A549 (cell line): ENCODE measurements at regions of chr1 and their contacts with region 1.

Region 1: DNA sequence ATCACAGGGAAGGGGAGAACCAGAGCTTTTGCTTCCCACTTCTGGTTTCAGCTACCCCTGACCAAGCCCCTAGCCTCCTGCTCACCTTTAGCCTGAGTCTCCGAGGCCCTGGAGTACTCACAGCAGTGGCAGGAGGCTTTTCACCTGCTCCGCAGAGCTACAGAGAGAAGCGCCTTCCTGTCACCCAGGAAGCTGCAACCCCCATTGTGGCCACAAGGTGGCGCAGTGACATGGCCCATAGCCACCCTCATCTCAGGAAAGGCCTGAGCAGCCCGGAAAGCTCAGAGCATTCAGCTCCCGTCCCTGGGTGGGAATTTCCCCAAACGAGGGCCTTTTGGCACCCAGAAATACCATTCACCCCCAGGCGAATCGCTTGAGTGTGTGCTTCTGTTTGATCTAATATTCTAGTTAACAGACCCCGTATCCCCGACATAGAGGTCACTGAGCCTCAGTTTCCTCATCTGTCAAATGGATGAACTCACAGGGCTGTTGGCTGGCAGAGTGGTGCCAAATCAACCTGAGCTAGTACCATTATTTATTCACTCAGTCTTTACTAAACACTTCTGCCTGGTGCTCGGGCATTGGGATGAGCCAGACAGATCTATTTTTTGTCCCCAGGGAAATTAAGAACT is 25.3 kb downstream of the A3GALT2 start:
- DNase-seq: peak; percentile 68 to 75
- ATAC-seq: peak; percentile 85 to 94
- H3K4me3 ChIP-seq: no peak overlapping the region
- H3K27ac ChIP-seq: no peak overlapping the region
- H3K4me1 ChIP-seq: no peaks in the 10 kb centered on the region
- CTCF ChIP-seq: peak; percentile 85
- EP300 ChIP-seq: no peak
- POLR2A ChIP-seq: no peak
- RAD21 ChIP-seq: peak; percentile 75

Region 2: DNA sequence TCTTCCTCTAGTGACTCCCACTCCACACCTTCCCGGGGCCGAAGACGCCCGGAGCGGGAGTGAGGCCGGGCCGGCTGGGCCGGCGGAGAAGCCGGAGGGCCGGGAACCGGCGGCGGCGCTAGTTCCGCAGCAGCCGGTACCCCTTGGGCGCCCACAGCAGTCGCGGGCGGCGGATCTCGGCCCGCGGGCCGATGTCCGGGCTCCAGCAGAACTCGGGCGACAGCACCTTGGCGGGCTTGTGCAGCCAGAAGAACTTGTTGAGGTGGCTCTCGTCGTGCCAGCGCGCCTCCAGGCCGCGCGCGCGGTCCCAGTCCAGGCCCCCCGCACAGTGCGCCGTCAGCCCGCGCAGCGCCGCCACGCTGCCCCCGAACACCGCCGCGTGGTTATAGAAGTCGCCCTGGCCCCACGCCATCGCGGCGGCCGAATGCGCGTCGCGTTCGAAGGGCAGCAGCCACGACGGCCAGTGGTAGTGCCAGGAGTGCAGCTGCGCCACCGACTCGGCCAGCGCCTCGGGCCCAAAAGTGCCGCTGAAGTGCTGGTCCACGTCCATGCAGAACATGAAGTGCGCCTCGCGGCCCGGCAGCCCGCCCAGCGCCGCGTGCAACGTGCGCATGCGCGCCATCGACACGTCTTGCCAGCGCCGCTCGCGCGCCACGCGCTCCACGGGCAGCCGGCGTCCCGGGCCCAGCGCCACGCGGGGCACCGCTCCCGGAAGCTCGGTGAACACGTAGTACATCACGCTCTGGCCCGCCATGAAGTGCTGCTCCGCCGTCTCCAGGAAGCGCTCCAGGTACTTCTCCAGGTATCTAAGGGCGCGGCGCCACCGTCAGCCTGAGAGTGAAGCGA is 11.3 kb after region 1 on chr1:
- CTCF ChIA-PET with region 1: interaction called, 26 read pairs
- POLR2A ChIA-PET with region 1: no interaction called
- DNase-seq: no peak
- ATAC-seq: no peak
- H3K4me3 ChIP-seq: no peak overlapping the region
- H3K27ac ChIP-seq: no peak overlapping the region
- H3K4me1 ChIP-seq: no peaks in the 10 kb centered on the region
- CTCF ChIP-seq: no peak
- EP300 ChIP-seq: no peak
- POLR2A ChIP-seq: no peak
- RAD21 ChIP-seq: no peak

Region 3: GRCh38 chr1:33367485-33368405 is 72.2 kb after region 1 on chr1:
- CTCF ChIA-PET with region 1: interaction called, 162 read pairs
- POLR2A ChIA-PET with region 1: no interaction called
- DNase-seq: peak; percentile 71 to 72
- ATAC-seq: peak; percentile 89 to 97
- H3K4me3 ChIP-seq: no peak overlapping the region
- H3K27ac ChIP-seq: peak overlapping the region in 1 of 2 experiments; percentile 66; a peak in 2 of 6 replicates
- H3K4me1 ChIP-seq: no peaks in the 10 kb centered on the region
- CTCF ChIP-seq: peak; percentile 83
- EP300 ChIP-seq: no peak
- POLR2A ChIP-seq: no peak
- RAD21 ChIP-seq: peak; percentile 92 to 95

Region 4: GRCh38 chr1:33455539-33456501 is 160.3 kb after region 1 on chr1:
- CTCF ChIA-PET with region 1: interaction called, 16 read pairs
- POLR2A ChIA-PET with region 1: no interaction called
- DNase-seq: peak; percentile 49 to 69
- ATAC-seq: peak; percentile 94 to 97
- H3K4me3 ChIP-seq: no peak overlapping the region
- H3K27ac ChIP-seq: no peak overlapping the region
- H3K4me1 ChIP-seq: no peaks in the 10 kb centered on the region
- CTCF ChIP-seq: peak; percentile 55
- EP300 ChIP-seq: no peak
- POLR2A ChIP-seq: no peak
- RAD21 ChIP-seq: peak; percentile 65 to 75

Region 5: GRCh38 chr1:33472349-33472980 is 176.9 kb after region 1 on chr1 and contains the start of gene ZSCAN20:
- CTCF ChIA-PET with region 1: interaction called, 74 read pairs
- POLR2A ChIA-PET with region 1: no interaction called
- DNase-seq: peak; percentile 80 to 95
- ATAC-seq: peak; percentile 96 to 98
- H3K4me3 ChIP-seq: peak within 1 kb of the TSS; percentile 91
- H3K27ac ChIP-seq: peak within 1 kb of the TSS; percentile 78 to 87
- H3K4me1 ChIP-seq: peaks cover 9% of the 10 kb centered on the region
- CTCF ChIP-seq: no peak
- EP300 ChIP-seq: no peak
- POLR2A ChIP-seq: peak; percentile 53
- RAD21 ChIP-seq: no peak
- polyA plus RNA-seq, gene ZSCAN20: 1.9 and 2.1 TPM in 2 replicates